ENCODE measurements at regions of chr13 and their contacts with region 1.

Region 1: DNA sequence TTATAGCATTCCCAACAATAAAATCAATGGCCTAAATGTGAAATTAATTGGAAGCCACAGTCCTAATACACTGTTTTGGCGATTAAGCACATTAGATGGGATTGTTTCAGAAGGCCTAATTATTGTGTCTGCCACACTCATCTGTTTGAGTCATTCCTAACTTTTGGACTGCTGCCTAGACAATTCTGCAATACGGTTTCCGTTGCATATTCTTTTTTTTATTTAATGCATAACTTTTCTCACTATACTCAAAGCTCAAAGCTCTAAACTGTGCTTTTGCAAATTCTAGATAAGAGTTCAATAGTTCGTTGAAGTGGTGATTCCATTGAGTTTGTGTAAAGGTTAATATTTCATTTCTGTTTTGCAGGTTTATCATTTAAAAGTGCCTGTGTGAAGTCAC is 53.1 kb downstream of the MBNL2 start:
- DNase-seq: peak in 1 of 2 donors; percentile 51
- ATAC-seq: peak in 7 of 8 donors; percentile 46 to 72 (median 66)
- H3K4me3 ChIP-seq: no peak overlapping the region
- H3K27ac ChIP-seq: peak overlapping the region in 8 of 10 donors; percentile 25 to 80 (median 50)
- H3K4me1 ChIP-seq: peaks cover 3 to 92% (median 79%) of the 10 kb centered on the region in 9 donors
- H3K27me3 ChIP-seq: no peaks in the 10 kb centered on the region
- CTCF ChIP-seq: no peak

Region 2: GRCh38 chr13:97221989-97222700 is 53.1 kb before region 1 on chr13 and contains the start of gene MBNL2:
- intact Hi-C with region 1: no loop called
- DNase-seq: peak; percentile 88 to 93
- ATAC-seq: peak; percentile 94 to 97 (median 96)
- H3K4me3 ChIP-seq: peak within 1 kb of the TSS; percentile 51 to 84 (median 62)
- H3K27ac ChIP-seq: peak within 1 kb of the TSS; percentile 78 to 93 (median 90)
- H3K4me1 ChIP-seq: peaks cover 6 to 37% (median 31%) of the 10 kb centered on the region in 9 donors
- H3K27me3 ChIP-seq: no peaks in the 10 kb centered on the region
- CTCF ChIP-seq: no peak
- total RNA-seq, gene MBNL2: 59.7 to 95.0 (median 85.2) TPM

Region 3: GRCh38 chr13:97235549-97236231 is 39.6 kb before region 1 on chr13:
- intact Hi-C with region 1: loop called in 1 of 10 experiments (anchors 5 kb)
- DNase-seq: peak; percentile 33 to 60
- ATAC-seq: peak in 7 of 8 donors; percentile 25 to 66 (median 52)
- H3K4me3 ChIP-seq: peak overlapping the region in 7 of 10 donors; percentile 10 to 39 (median 20)
- H3K27ac ChIP-seq: peak overlapping the region; percentile 3 to 88 (median 52)
- H3K4me1 ChIP-seq: peaks cover 19 to 100% (median 88%) of the 10 kb centered on the region in 9 donors
- H3K27me3 ChIP-seq: no peaks in the 10 kb centered on the region
- CTCF ChIP-seq: no peak

Region 4: GRCh38 chr13:97328222-97328790 is 53.0 kb after region 1 on chr13:
- intact Hi-C with region 1: loop called in 1 of 10 experiments (anchors 10 kb)
- DNase-seq: no peak
- ATAC-seq: peak in 7 of 8 donors; percentile 37 to 59 (median 46)
- H3K4me3 ChIP-seq: no peak overlapping the region
- H3K27ac ChIP-seq: peak overlapping the region in 3 of 10 donors; percentile 5 to 53 (median 6)
- H3K4me1 ChIP-seq: peaks cover 5 to 94% (median 48%) of the 10 kb centered on the region in 9 donors
- H3K27me3 ChIP-seq: no peaks in the 10 kb centered on the region
- CTCF ChIP-seq: no peak

Measured in heart right ventricle (tissue), 16 donors.